ENCODE measurements at regions of chr11 and their contacts with region 1.

Region 1: DNA sequence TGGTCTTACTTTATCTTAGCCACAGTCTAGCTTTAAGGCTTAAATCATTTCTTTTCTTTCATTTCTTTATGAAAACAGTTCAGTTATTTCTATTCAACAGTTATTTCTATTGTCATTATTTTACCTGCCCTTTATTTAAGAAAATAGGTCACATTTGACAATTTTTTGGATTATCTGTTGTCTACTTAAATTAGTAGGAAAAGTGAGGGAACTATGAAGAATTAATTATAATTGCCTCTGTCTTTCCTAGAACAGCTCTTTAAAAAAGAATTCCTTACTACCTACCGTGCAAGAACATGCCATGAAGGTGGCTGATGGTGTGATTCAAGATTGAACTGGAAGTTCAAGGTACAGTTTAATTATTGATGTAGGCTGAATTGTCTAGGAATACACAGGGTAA is at the start of gene OR4C6:
- DNase-seq: no peak
- ATAC-seq: no peak
- H3K4me3 Mint-ChIP-seq: no peak within 1 kb of the TSS
- H3K27ac Mint-ChIP-seq: no peak within 1 kb of the TSS
- H3K4me1 Mint-ChIP-seq: no peaks in the 10 kb centered on the region
- H3K27me3 Mint-ChIP-seq: no peaks in the 10 kb centered on the region
- total RNA-seq, gene OR4C6: not detected

Region 2: GRCh38 chr11:55457641-55458040 is 204.3 kb before region 1 on chr11:
- CTCF ChIA-PET with region 1: no interaction called
- POLR2A ChIA-PET with region 1: no interaction called
- intact Hi-C with region 1: no loop called
- DNase-seq: no peak
- ATAC-seq: no peak
- H3K4me3 Mint-ChIP-seq: no peak overlapping the region
- H3K27ac Mint-ChIP-seq: no peak overlapping the region
- H3K4me1 Mint-ChIP-seq: no peaks in the 10 kb centered on the region
- H3K27me3 Mint-ChIP-seq: no peaks in the 10 kb centered on the region

Region 3: GRCh38 chr11:55673860-55674259 is 12.0 kb after region 1 on chr11:
- CTCF ChIA-PET with region 1: no interaction called
- POLR2A ChIA-PET with region 1: no interaction called
- intact Hi-C with region 1: loop called in 1 of 2 experiments (anchors 1 kb)
- DNase-seq: no peak
- ATAC-seq: no peak
- H3K4me3 Mint-ChIP-seq: no peak overlapping the region
- H3K27ac Mint-ChIP-seq: no peak overlapping the region
- H3K4me1 Mint-ChIP-seq: no peaks in the 10 kb centered on the region
- H3K27me3 Mint-ChIP-seq: no peaks in the 10 kb centered on the region

Region 4: GRCh38 chr11:55697817-55698216 is 35.9 kb after region 1 on chr11:
- CTCF ChIA-PET with region 1: no interaction called
- POLR2A ChIA-PET with region 1: no interaction called
- intact Hi-C with region 1: loop called in 1 of 2 experiments (anchors 5 kb)
- DNase-seq: no peak
- ATAC-seq: no peak
- H3K4me3 Mint-ChIP-seq: no peak overlapping the region
- H3K27ac Mint-ChIP-seq: no peak overlapping the region
- H3K4me1 Mint-ChIP-seq: no peaks in the 10 kb centered on the region
- H3K27me3 Mint-ChIP-seq: no peaks in the 10 kb centered on the region

Region 5: GRCh38 chr11:55811067-55811466 is 149.2 kb after region 1 on chr11 and contains the start of gene OR5L1:
- CTCF ChIA-PET with region 1: no interaction called
- POLR2A ChIA-PET with region 1: no interaction called
- intact Hi-C with region 1: no loop called
- DNase-seq: no peak
- ATAC-seq: no peak
- H3K4me3 Mint-ChIP-seq: no peak within 1 kb of the TSS
- H3K27ac Mint-ChIP-seq: no peak within 1 kb of the TSS
- H3K4me1 Mint-ChIP-seq: no peaks in the 10 kb centered on the region
- H3K27me3 Mint-ChIP-seq: no peaks in the 10 kb centered on the region
- total RNA-seq, gene OR5L1: not detected